Activated CD4-positive, alpha-beta T cell treated with anti-CD3 and anti-CD28 coated beads for 36 hours (primary cell): ENCODE measurements at regions of chr2 and their contacts with region 1.

Region 1: DNA sequence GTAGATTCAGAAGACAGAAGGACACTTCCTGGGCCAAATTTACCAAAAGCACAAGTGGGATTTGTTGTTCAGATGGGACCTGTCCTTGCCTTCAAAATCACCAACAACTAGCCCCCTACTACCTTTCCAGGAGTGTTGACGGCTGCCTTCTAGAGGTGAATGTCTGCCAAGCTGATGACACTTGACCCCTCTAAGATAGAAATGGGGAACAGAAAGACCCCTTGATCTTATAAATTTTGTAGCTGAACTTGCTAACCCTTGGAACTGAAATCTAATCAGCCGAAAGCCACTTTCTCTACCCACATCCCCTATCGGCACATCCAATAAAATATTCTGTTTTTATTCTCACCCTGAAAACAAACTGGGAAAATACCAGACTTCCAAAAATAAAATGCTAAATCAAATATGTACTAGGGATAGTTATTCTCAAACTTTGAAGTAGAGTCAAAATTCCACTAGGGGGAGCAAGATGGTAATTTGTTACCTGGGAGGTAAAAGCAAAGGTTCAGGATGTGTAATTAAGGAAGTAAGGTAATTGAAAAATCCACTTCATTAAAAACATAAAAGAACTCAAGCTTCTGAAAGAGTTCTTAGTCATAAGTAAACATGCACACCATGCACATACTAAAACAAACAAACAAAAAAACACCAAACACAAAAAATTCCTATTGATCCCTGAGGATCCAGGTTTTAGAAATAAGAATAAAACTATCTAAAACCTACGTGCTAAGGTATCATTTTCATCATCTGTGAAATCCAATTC is 119.2 kb downstream of the ANKRD44 start:
- DNase-seq: no peak
- ATAC-seq: peak; percentile 54
- H3K4me3 Mint-ChIP-seq: peak overlapping the region; percentile 33
- H3K27ac Mint-ChIP-seq: peak overlapping the region; percentile 59
- H3K4me1 Mint-ChIP-seq: peaks cover 79% of the 10 kb centered on the region
- H3K27me3 Mint-ChIP-seq: no peaks in the 10 kb centered on the region

Region 2: GRCh38 chr2:196873511-196873910 is 317.8 kb before region 1 on chr2:
- CTCF ChIA-PET with region 1: no interaction called
- POLR2A ChIA-PET with region 1: no interaction called
- intact Hi-C with region 1: no loop called
- DNase-seq: no peak
- ATAC-seq: no peak
- H3K4me3 Mint-ChIP-seq: no peak overlapping the region
- H3K27ac Mint-ChIP-seq: no peak overlapping the region
- H3K4me1 Mint-ChIP-seq: no peaks in the 10 kb centered on the region
- H3K27me3 Mint-ChIP-seq: no peaks in the 10 kb centered on the region

Region 3: DNA sequence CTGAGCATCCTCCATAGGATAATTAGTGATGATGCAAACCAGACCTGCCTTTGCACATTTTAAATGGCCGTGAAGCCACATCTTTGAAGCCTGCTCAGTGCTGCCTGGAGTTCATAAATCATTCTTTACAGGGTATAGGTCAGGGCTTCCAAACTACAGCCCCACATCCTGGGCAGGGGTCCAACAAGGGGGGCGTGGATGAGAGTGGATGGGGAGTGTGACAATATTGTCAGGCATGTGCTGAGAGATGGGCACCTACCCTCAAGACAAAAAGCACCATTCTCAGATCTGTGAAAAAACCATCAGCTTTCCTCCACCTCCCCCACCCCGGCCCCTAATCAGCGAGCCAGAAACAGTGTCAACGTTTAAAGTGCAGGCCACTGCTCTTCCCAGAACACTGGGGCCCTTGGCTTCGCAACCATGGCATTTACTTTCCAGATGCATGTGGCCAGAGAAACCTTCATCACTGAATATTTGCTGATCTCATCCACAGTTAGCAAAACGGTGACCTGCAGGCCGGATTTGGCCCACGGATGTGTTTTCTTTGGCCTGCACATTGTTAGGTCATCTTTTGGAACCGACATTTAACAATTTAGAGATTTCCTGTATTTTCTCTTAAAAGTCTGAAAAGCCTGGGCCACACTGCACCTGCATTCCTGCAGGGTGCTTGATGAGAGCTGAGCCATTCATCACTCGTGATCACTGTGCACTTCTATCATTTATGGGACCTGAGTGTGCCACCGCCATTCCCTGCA is 11.4 kb before region 1 on chr2:
- CTCF ChIA-PET with region 1: interaction called, 29 read pairs
- POLR2A ChIA-PET with region 1: no interaction called
- intact Hi-C with region 1: no loop called
- DNase-seq: no peak
- ATAC-seq: no peak
- H3K4me3 Mint-ChIP-seq: no peak overlapping the region
- H3K27ac Mint-ChIP-seq: peak overlapping the region; percentile 6
- H3K4me1 Mint-ChIP-seq: peaks cover 69% of the 10 kb centered on the region
- H3K27me3 Mint-ChIP-seq: no peaks in the 10 kb centered on the region

Region 4: DNA sequence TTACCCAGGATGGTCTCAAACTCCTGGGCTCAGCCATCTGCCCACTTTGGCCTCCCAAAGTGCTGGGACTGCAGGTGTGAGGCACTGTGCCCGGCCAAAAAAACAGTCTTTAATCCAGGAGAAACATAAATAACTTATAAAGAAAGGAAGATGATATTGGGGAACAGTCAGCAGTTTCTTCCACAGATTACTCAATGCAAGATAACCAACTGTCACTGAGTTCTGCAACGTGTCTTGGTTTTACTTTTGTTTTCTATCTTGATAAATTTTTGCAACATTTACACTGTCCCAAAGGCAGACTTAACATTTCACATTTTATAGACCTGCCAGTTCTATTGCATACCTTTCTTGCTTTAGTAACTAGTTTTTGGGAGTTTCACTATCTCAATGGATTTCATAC is 48.1 kb after region 1 on chr2:
- CTCF ChIA-PET with region 1: interaction called, 13 read pairs
- POLR2A ChIA-PET with region 1: no interaction called
- intact Hi-C with region 1: loop called in 1 of 2 experiments (anchors 1 kb)
- DNase-seq: no peak
- ATAC-seq: peak; percentile 59
- H3K4me3 Mint-ChIP-seq: peak overlapping the region; percentile 75
- H3K27ac Mint-ChIP-seq: peak overlapping the region; percentile 92
- H3K4me1 Mint-ChIP-seq: peaks cover 87% of the 10 kb centered on the region
- H3K27me3 Mint-ChIP-seq: no peaks in the 10 kb centered on the region

Region 5: GRCh38 chr2:197261808-197262226 is 70.5 kb after region 1 on chr2:
- CTCF ChIA-PET with region 1: interaction called, 17 read pairs
- POLR2A ChIA-PET with region 1: no interaction called
- intact Hi-C with region 1: no loop called
- DNase-seq: no peak
- ATAC-seq: peak; percentile 2
- H3K4me3 Mint-ChIP-seq: peak overlapping the region; percentile 56
- H3K27ac Mint-ChIP-seq: peak overlapping the region; percentile 88
- H3K4me1 Mint-ChIP-seq: peaks cover 82% of the 10 kb centered on the region
- H3K27me3 Mint-ChIP-seq: no peaks in the 10 kb centered on the region

Region 6: GRCh38 chr2:197304556-197305011 is 113.2 kb after region 1 on chr2:
- CTCF ChIA-PET with region 1: interaction called, 53 read pairs
- POLR2A ChIA-PET with region 1: no interaction called
- intact Hi-C with region 1: loop called in 1 of 2 experiments (anchors 1 kb)
- DNase-seq: peak; percentile 56
- ATAC-seq: peak; percentile 70
- H3K4me3 Mint-ChIP-seq: peak overlapping the region; percentile 93
- H3K27ac Mint-ChIP-seq: peak overlapping the region; percentile 98
- H3K4me1 Mint-ChIP-seq: peaks cover 80% of the 10 kb centered on the region
- H3K27me3 Mint-ChIP-seq: no peaks in the 10 kb centered on the region

Region 7: DNA sequence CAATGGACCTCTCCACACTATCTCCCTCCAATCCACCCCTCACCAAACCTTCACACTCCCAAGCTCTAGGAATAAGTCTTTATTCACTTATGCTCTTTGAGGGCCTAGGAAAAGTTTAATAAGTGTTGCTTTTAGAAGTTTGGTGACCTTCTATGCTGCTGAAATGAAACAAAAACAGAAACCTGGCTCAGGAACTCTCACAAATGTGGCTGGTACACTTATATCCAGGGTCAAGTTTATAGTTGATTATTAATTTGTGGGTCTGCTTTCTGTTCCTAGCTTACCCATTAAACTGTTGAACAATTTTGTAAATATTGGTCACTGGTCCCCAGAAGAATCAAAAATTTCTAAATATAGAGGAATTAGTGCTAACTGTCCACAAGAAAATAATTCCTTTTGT is 133.4 kb after region 1 on chr2:
- CTCF ChIA-PET with region 1: interaction called, 13 read pairs
- POLR2A ChIA-PET with region 1: no interaction called
- intact Hi-C with region 1: no loop called
- DNase-seq: no peak
- ATAC-seq: no peak
- H3K4me3 Mint-ChIP-seq: peak overlapping the region; percentile 55
- H3K27ac Mint-ChIP-seq: peak overlapping the region; percentile 93
- H3K4me1 Mint-ChIP-seq: peaks cover 81% of the 10 kb centered on the region
- H3K27me3 Mint-ChIP-seq: no peaks in the 10 kb centered on the region

Region 8: DNA sequence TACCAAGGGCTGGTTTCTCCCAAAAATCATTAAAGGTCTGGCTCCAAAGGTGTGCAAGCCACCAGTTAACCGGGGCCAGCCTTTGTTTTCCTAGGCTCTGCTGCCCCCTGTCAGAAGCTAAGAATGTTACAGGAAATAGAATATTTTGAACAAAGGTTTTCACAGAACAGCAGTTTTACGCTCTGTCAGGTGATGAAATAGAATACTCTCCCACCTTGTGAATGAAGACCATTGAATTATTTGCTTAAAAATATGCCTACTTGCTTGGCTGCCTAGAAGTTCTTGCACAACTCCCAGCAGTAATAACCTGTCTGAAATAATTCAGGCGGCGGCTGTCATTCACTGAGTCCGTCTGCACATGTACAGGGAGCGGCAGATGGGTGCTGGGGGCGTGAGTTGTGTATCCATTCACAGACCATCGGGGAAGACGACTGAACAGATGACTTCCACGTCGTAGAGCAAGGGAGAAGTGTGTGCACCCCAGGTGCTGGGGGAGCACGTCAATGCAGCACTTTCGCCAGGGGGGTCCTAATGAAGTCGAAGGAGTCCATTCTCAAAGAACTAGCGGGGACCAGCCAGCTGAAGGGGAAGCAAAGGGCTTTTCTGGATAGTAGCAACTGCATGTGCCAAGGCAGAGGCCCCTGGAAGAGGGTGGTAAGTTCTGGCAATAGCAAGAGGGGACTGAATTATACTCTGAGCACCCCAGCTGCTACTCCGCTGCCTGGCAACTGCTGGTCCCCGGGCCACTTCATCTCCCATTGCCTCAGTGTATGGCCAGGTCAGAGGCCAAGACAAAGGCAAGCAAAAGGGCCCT is 187.3 kb after region 1 on chr2:
- CTCF ChIA-PET with region 1: interaction called, 6 read pairs
- POLR2A ChIA-PET with region 1: no interaction called
- intact Hi-C with region 1: loop called (anchors 1 kb)
- DNase-seq: peak; percentile 80
- ATAC-seq: peak; percentile 83
- H3K4me3 Mint-ChIP-seq: no peak overlapping the region
- H3K27ac Mint-ChIP-seq: no peak overlapping the region
- H3K4me1 Mint-ChIP-seq: peaks cover 19% of the 10 kb centered on the region
- H3K27me3 Mint-ChIP-seq: no peaks in the 10 kb centered on the region

Region 9: GRCh38 chr2:197461057-197461456 is 269.7 kb after region 1 on chr2:
- CTCF ChIA-PET with region 1: no interaction called
- POLR2A ChIA-PET with region 1: no interaction called
- intact Hi-C with region 1: no loop called
- DNase-seq: no peak
- ATAC-seq: no peak
- H3K4me3 Mint-ChIP-seq: no peak overlapping the region
- H3K27ac Mint-ChIP-seq: peak overlapping the region; percentile 14
- H3K4me1 Mint-ChIP-seq: peaks cover 24% of the 10 kb centered on the region
- H3K27me3 Mint-ChIP-seq: no peaks in the 10 kb centered on the region